ENCODE measurements at regions of chr10 and their contacts with region 1.

Region 1: GRCh38 chr10:32298054-32298812 is 48.7 kb downstream of the EPC1 start:
- DNase-seq: no peak
- H3K4me3 Mint-ChIP-seq: peak overlapping the region; percentile 69
- H3K27ac Mint-ChIP-seq: peak overlapping the region; percentile 90
- H3K4me1 Mint-ChIP-seq: peaks cover 62% of the 10 kb centered on the region
- H3K27me3 Mint-ChIP-seq: no peaks in the 10 kb centered on the region

Region 2: DNA sequence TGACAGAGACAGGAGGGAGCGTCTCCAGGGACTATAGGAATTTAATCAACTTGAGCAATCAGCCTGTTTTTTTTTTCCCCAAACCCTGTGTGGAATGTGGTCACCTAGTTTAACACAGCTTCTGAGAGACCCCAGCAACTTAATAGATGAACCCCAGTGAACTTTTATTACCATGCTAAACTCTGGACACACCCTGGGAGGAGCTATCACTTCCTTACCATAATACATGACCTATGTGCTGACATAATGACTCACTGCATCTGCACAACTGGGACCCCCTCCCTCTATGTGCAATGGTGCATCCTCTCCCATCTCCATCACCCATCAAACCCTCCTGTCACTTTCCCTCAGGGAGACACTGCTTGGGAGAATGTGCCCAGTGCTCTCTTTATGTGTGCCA is 34.9 kb before region 1 on chr10:
- CTCF ChIA-PET with region 1: interaction called, 3 read pairs
- POLR2A ChIA-PET with region 1: no interaction called
- intact Hi-C with region 1: loop called (anchors 5 kb)
- DNase-seq: no peak
- H3K4me3 Mint-ChIP-seq: no peak overlapping the region
- H3K27ac Mint-ChIP-seq: no peak overlapping the region
- H3K4me1 Mint-ChIP-seq: peaks cover 5% of the 10 kb centered on the region
- H3K27me3 Mint-ChIP-seq: no peaks in the 10 kb centered on the region

Region 3: GRCh38 chr10:32332299-32332750 is 34.1 kb after region 1 on chr10:
- CTCF ChIA-PET with region 1: no interaction called
- POLR2A ChIA-PET with region 1: no interaction called
- intact Hi-C with region 1: loop called (anchors 5 kb)
- DNase-seq: peak; percentile 90
- H3K4me3 Mint-ChIP-seq: peak overlapping the region; percentile 75
- H3K27ac Mint-ChIP-seq: peak overlapping the region; percentile 91
- H3K4me1 Mint-ChIP-seq: peaks cover 93% of the 10 kb centered on the region
- H3K27me3 Mint-ChIP-seq: no peaks in the 10 kb centered on the region